ENCODE measurements at regions of chr12 and their contacts with region 1.

Region 1: GRCh38 chr12:14769969-14770495 is 33.2 kb downstream of the WBP11 start:
- DNase-seq: peak; percentile 89 to 95
- ATAC-seq: peak; percentile 52 to 71 (median 58)
- H3K4me3 ChIP-seq: peak overlapping the region; percentile 70
- H3K4me3 Mint-ChIP-seq: peak overlapping the region; percentile 96
- H3K27ac ChIP-seq: peak overlapping the region; percentile 93
- H3K27ac Mint-ChIP-seq: peak overlapping the region; percentile 99
- H3K4me1 ChIP-seq: peaks cover 39% of the 10 kb centered on the region
- H3K4me1 Mint-ChIP-seq: peaks cover 75% of the 10 kb centered on the region in 2 donors
- H3K27me3 ChIP-seq: no peaks in the 10 kb centered on the region
- H3K27me3 Mint-ChIP-seq: no peaks in the 10 kb centered on the region
- CTCF ChIP-seq: peak; percentile 84

Region 2: GRCh38 chr12:13100882-13101769 is 1668.9 kb before region 1 on chr12:
- intact Hi-C with region 1: loop called (anchors 5 kb)
- DNase-seq: peak; percentile 96 to 97
- ATAC-seq: peak; percentile 86 to 96 (median 91)
- H3K4me3 ChIP-seq: peak overlapping the region; percentile 50
- H3K4me3 Mint-ChIP-seq: peak overlapping the region; percentile 90
- H3K27ac ChIP-seq: peak overlapping the region; percentile 90
- H3K27ac Mint-ChIP-seq: peak overlapping the region; percentile 82 to 97
- H3K4me1 ChIP-seq: peaks cover 32% of the 10 kb centered on the region
- H3K4me1 Mint-ChIP-seq: peaks cover 40 to 45% of the 10 kb centered on the region in 2 donors
- H3K27me3 ChIP-seq: no peaks in the 10 kb centered on the region
- H3K27me3 Mint-ChIP-seq: peaks cover 0 to 5% of the 10 kb centered on the region in 2 donors
- CTCF ChIP-seq: no peak

Region 3: DNA sequence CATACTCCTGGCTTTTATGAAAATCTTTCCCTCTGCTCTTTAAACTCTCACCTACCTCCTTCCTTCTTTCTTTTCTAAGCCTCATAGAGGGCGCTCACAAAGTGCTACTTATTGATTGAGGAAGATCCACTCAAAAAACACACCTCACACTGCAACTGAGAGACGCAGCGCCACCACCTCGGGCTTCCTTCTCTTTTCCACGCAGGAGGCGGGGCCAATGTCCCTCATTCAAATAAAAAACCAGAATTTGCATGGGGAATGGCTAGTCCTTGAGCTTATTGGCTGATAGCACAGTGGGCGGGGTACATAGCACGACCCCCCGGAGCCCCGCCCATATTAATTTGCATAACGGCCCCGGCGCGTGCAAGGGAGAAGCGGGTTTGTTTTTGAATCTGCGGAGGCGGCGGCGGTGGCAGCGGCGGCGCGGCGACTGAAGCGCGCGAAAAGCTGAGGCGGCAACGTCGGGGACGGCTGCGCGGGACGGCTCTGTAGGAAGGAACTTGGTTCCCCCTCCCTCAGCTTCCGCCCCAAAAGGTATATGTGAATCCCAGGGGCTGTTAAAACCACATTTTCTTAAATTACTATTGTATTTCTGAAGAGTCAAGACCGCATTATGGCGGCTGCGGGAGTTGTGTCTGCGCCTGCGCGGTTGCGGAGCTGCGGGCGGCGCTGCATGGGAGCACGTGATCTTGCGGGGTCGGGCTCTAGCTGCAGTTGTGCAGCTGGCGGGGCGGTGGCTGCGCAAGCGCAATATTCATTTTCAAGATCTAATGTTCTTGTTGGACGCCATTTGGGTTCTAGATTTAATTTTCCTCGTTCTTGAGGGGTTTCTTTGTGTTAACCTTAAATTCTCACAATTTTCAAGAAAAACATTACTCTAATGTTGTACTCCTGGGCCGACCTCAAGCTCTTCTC is 404.5 kb before region 1 on chr12 and contains the start of gene ATF7IP:
- intact Hi-C with region 1: loop called (anchors 2 kb)
- DNase-seq: peak; percentile 97 to 98
- ATAC-seq: peak; percentile 86 to 96 (median 88)
- H3K4me3 ChIP-seq: peak within 1 kb of the TSS; percentile 89
- H3K4me3 Mint-ChIP-seq: peak within 1 kb of the TSS; percentile 97
- H3K27ac ChIP-seq: peak within 1 kb of the TSS; percentile 97
- H3K27ac Mint-ChIP-seq: peak within 1 kb of the TSS; percentile 89 to 100
- H3K4me1 ChIP-seq: peaks cover 17% of the 10 kb centered on the region
- H3K4me1 Mint-ChIP-seq: peaks cover 31 to 43% of the 10 kb centered on the region in 2 donors
- H3K27me3 ChIP-seq: no peaks in the 10 kb centered on the region
- H3K27me3 Mint-ChIP-seq: no peaks in the 10 kb centered on the region
- CTCF ChIP-seq: no peak
- total RNA-seq, gene ATF7IP: 161 to 180 (median 173) TPM

Region 4: GRCh38 chr12:14417715-14418114 is 352.3 kb before region 1 on chr12:
- intact Hi-C with region 1: loop called (anchors 2 kb)
- DNase-seq: peak; percentile 59 to 89
- ATAC-seq: peak; percentile 49 to 66 (median 63)
- H3K4me3 ChIP-seq: no peak overlapping the region
- H3K4me3 Mint-ChIP-seq: peak overlapping the region; percentile 86
- H3K27ac ChIP-seq: peak overlapping the region; percentile 42
- H3K27ac Mint-ChIP-seq: peak overlapping the region; percentile 89 to 90
- H3K4me1 ChIP-seq: peaks cover 14% of the 10 kb centered on the region
- H3K4me1 Mint-ChIP-seq: peaks cover 56 to 59% of the 10 kb centered on the region in 2 donors
- H3K27me3 ChIP-seq: no peaks in the 10 kb centered on the region
- H3K27me3 Mint-ChIP-seq: no peaks in the 10 kb centered on the region
- CTCF ChIP-seq: no peak

Region 5: DNA sequence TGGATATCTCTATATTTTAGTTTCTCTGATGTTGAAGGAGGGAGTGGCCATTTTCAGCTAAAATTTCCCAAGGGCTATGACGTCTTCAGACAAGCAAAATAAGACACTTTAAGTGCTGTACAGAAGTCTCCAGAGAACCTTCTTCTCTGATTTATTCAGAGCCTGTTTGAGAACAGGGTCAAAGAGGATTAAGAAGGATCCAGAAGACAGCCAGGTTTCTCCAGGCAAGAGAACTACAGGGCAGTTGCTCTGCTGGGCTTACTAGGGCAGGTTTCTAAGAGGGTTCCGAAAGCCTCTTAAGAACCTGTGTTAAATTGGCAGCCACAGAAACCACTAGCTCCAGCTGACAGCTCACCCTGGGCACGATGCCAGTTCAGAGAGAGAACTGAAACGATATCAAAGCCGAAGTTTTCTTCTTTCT is 114.4 kb after region 1 on chr12:
- intact Hi-C with region 1: loop called (anchors 2 kb)
- DNase-seq: peak; percentile 67 to 95
- ATAC-seq: peak; percentile 91 to 98 (median 92)
- H3K4me3 ChIP-seq: no peak overlapping the region
- H3K4me3 Mint-ChIP-seq: peak overlapping the region; percentile 62
- H3K27ac ChIP-seq: no peak overlapping the region
- H3K27ac Mint-ChIP-seq: peak overlapping the region; percentile 61 to 88
- H3K4me1 ChIP-seq: peaks cover 8% of the 10 kb centered on the region
- H3K4me1 Mint-ChIP-seq: peaks cover 23 to 31% of the 10 kb centered on the region in 2 donors
- H3K27me3 ChIP-seq: peaks cover 8% of the 10 kb centered on the region
- H3K27me3 Mint-ChIP-seq: peaks cover 36 to 63% of the 10 kb centered on the region in 2 donors
- CTCF ChIP-seq: no peak

Region 6: DNA sequence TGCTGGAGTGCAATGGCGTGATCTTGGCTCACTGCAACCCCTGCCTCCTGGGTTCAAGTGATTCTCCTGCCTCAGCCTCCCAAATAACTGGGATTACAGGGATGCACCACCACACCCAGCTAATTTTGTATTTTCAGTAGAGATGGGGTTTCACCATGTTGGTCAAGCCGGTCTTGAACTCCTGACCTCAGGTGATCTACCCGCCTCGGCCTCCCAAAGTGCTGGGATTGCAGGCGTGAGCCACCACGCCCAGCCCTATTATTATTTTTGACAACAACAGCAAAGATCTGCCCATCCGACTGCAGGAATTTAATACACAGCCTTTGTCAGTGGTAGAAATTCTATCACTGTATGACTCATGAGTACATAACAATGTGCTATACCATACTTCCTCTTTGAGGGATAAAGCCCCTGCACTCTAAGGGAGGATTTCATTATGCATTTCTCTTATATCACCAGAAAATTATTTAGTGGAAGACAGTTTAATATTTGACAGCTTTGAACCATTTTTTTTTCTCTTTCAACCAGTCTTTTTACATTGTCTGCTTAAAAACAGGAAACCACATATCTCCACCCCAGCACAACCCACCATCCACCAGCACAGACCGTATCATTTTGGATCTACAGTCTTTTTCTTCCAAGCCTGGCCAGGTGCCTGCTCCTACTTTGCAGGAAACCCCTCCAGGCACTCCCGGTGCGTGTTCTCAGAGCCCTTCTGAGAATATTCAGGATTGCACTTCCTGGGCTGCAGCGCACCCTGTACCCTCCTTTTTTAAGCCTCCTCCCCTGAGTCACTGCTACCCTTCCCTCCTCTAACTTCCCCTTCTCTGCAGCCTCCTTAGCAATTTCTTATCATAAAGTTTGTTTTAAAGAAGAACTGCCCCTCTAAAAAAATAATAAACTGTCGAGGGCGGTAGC is 190.8 kb after region 1 on chr12:
- intact Hi-C with region 1: loop called (anchors 2 kb)
- DNase-seq: peak; percentile 38 to 75
- ATAC-seq: peak; percentile 56 to 76 (median 60)
- H3K4me3 ChIP-seq: peak overlapping the region; percentile 91
- H3K4me3 Mint-ChIP-seq: peak overlapping the region; percentile 100
- H3K27ac ChIP-seq: peak overlapping the region; percentile 95
- H3K27ac Mint-ChIP-seq: peak overlapping the region; percentile 97 to 98
- H3K4me1 ChIP-seq: peaks cover 41% of the 10 kb centered on the region
- H3K4me1 Mint-ChIP-seq: peaks cover 75 to 76% of the 10 kb centered on the region in 2 donors
- H3K27me3 ChIP-seq: no peaks in the 10 kb centered on the region
- H3K27me3 Mint-ChIP-seq: no peaks in the 10 kb centered on the region
- CTCF ChIP-seq: no peak

Measured in natural killer cell (primary cell).